Natural killer cell (primary cell): ENCODE measurements at regions of chr16 and their contacts with region 1.

Region 1: DNA sequence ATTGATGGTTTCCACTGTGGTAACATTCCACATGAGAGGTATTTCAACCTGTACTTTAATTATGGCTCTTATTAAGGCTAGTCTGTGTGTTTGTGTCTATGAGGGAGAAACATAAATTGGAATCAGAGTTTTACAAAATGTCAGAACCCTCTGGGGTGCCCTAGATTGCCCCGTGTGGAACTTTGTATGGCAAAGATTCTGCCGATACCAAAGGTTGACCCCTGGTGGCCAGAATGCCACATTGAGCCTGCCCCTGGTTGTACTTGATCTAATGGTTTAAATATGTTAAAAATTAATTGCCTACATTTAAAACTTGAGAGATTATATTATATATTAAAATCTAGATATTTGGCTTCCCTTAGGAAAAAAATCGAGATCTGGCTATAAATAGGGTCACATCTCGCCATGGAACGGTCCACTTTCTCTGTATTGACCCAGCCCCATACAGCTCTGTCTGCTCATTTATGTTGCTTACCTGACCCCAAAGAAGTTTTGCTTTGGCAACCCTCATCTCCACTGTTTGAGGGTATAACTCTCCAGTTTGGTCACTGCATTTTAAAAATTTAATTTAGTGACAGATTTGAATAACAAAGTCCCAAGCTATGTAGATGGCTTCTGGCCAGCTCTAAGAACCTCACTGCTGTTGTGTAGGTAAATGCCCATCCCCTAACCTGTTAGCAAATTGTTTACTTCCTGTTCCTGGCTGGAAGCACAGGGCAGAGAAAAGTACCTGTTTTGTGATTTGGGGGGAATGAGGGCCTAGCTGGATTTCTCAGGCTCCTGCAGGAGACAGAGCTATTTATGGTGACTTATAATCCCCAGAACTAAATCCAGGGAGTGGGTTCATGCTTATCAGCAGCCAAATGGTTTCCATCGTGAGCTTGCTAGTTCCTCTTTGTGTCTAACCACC is 95.0 kb downstream of the PLCG2 start:
- DNase-seq: peak; percentile 69 to 70
- ATAC-seq: peak; percentile 89 to 94 (median 92)
- H3K4me3 ChIP-seq: no peak overlapping the region
- H3K4me3 Mint-ChIP-seq: peak overlapping the region; percentile 45
- H3K27ac ChIP-seq: no peak overlapping the region
- H3K27ac Mint-ChIP-seq: peak overlapping the region; percentile 65 to 82
- H3K4me1 ChIP-seq: peaks cover 25% of the 10 kb centered on the region
- H3K4me1 Mint-ChIP-seq: peaks cover 32 to 40% of the 10 kb centered on the region in 2 donors
- H3K27me3 ChIP-seq: no peaks in the 10 kb centered on the region
- H3K27me3 Mint-ChIP-seq: no peaks in the 10 kb centered on the region
- CTCF ChIP-seq: peak; percentile 93

Region 2: GRCh38 chr16:81632392-81633146 is 241.5 kb before region 1 on chr16:
- intact Hi-C with region 1: loop called (anchors 10 kb)
- DNase-seq: peak; percentile 68 to 91
- ATAC-seq: peak; percentile 84 to 87 (median 84)
- H3K4me3 ChIP-seq: no peak overlapping the region
- H3K4me3 Mint-ChIP-seq: peak overlapping the region; percentile 49
- H3K27ac ChIP-seq: peak overlapping the region; percentile 73
- H3K27ac Mint-ChIP-seq: peak overlapping the region; percentile 87 to 88
- H3K4me1 ChIP-seq: peaks cover 35% of the 10 kb centered on the region
- H3K4me1 Mint-ChIP-seq: peaks cover 40 to 53% of the 10 kb centered on the region in 2 donors
- H3K27me3 ChIP-seq: no peaks in the 10 kb centered on the region
- H3K27me3 Mint-ChIP-seq: no peaks in the 10 kb centered on the region
- CTCF ChIP-seq: no peak

Region 3: GRCh38 chr16:81778861-81779535 is 95.1 kb before region 1 on chr16 and contains the start of gene PLCG2:
- intact Hi-C with region 1: loop called (anchors 1 kb)
- DNase-seq: peak; percentile 78 to 88
- ATAC-seq: peak; percentile 96 to 99 (median 98)
- H3K4me3 ChIP-seq: peak within 1 kb of the TSS; percentile 90
- H3K4me3 Mint-ChIP-seq: peak within 1 kb of the TSS; percentile 94
- H3K27ac ChIP-seq: peak within 1 kb of the TSS; percentile 68
- H3K27ac Mint-ChIP-seq: peak within 1 kb of the TSS; percentile 85 to 89
- H3K4me1 ChIP-seq: peaks cover 51% of the 10 kb centered on the region
- H3K4me1 Mint-ChIP-seq: peaks cover 52 to 60% of the 10 kb centered on the region in 2 donors
- H3K27me3 ChIP-seq: no peaks in the 10 kb centered on the region
- H3K27me3 Mint-ChIP-seq: no peaks in the 10 kb centered on the region
- CTCF ChIP-seq: no peak
- total RNA-seq, gene PLCG2: 250 to 298 (median 285) TPM

Region 4: GRCh38 chr16:81817789-81818567 is 56.1 kb before region 1 on chr16:
- intact Hi-C with region 1: loop called (anchors 2 kb)
- DNase-seq: peak; percentile 68 to 69
- ATAC-seq: peak; percentile 67 to 90 (median 79)
- H3K4me3 ChIP-seq: no peak overlapping the region
- H3K4me3 Mint-ChIP-seq: peak overlapping the region; percentile 82
- H3K27ac ChIP-seq: peak overlapping the region; percentile 99
- H3K27ac Mint-ChIP-seq: peak overlapping the region; percentile 98 to 99
- H3K4me1 ChIP-seq: peaks cover 97% of the 10 kb centered on the region
- H3K4me1 Mint-ChIP-seq: peaks cover 76 to 80% of the 10 kb centered on the region in 2 donors
- H3K27me3 ChIP-seq: no peaks in the 10 kb centered on the region
- H3K27me3 Mint-ChIP-seq: no peaks in the 10 kb centered on the region
- CTCF ChIP-seq: no peak

Region 5: GRCh38 chr16:81861503-81861902 is 12.6 kb before region 1 on chr16:
- intact Hi-C with region 1: loop called (anchors 1 kb)
- DNase-seq: no peak
- ATAC-seq: peak; percentile 88 to 96 (median 95)
- H3K4me3 ChIP-seq: no peak overlapping the region
- H3K4me3 Mint-ChIP-seq: peak overlapping the region; percentile 79
- H3K27ac ChIP-seq: peak overlapping the region; percentile 50
- H3K27ac Mint-ChIP-seq: peak overlapping the region; percentile 86 to 88
- H3K4me1 ChIP-seq: peaks cover 28% of the 10 kb centered on the region
- H3K4me1 Mint-ChIP-seq: peaks cover 40 to 52% of the 10 kb centered on the region in 2 donors
- H3K27me3 ChIP-seq: no peaks in the 10 kb centered on the region
- H3K27me3 Mint-ChIP-seq: no peaks in the 10 kb centered on the region
- CTCF ChIP-seq: no peak